Activated T-helper 1 cell treated with anti-CD3 and anti-CD28 coated beads, Interleukin-12 subunit alpha, Interleukin-12 subunit beta, Interleukin-2, Interleukin-4 antibody, amounts not matched to agents 30 ng/mL and 10 ng/mL and 1 ng/mL, durations not matched to agents 14 hours and 24 hours and 36 hours (primary cell): ENCODE measurements at regions of chr2 and their contacts with region 1.

Region 1: DNA sequence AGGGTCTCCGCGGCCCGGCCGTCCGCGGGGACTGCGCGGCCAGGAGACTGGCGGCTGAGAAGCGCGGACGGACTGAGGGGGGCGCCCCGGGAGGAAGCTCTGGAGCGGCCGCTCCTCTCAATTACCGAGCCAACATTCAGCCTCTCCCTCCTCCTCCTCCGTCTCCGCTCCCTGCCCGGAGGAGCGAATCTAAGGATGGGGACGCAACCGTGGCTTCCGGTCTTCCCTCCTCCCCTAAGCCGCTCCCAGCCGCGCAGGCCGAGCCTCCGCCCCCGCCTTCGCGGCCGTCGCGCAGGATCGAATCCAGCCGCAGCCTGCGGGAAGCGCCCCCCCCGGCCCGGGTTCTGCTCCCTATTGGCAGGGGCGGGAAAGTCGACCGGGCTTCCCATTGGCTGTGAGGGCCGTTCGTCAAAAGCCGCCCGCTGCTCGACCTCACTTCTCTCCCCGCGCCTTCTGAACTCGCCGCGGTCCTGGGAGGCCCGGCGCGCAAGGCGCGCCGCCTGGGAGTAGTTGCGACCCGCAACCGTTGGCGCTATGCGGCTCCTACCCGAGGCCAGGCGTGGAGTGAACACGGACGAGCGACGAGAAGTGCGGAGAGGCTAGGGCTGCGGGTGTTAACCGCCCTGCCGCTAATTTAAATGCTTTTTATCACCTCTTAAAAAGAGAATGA is at the start of gene HNRNPLL:
- DNase-seq: peak; percentile 94
- H3K4me3 Mint-ChIP-seq: peak within 1 kb of the TSS; percentile 91
- H3K27ac Mint-ChIP-seq: peak within 1 kb of the TSS; percentile 92
- H3K4me1 Mint-ChIP-seq: peaks cover 54% of the 10 kb centered on the region
- H3K27me3 Mint-ChIP-seq: no peaks in the 10 kb centered on the region
- total RNA-seq, gene HNRNPLL: 85.8 and 91.5 TPM in 2 replicates

Region 2: GRCh38 chr2:38590053-38590452 is 12.8 kb before region 1 on chr2:
- intact Hi-C with region 1: loop called (anchors 1 kb)
- DNase-seq: no peak
- H3K4me3 Mint-ChIP-seq: no peak overlapping the region
- H3K27ac Mint-ChIP-seq: no peak overlapping the region
- H3K4me1 Mint-ChIP-seq: peaks cover 64% of the 10 kb centered on the region
- H3K27me3 Mint-ChIP-seq: no peaks in the 10 kb centered on the region

Region 3: DNA sequence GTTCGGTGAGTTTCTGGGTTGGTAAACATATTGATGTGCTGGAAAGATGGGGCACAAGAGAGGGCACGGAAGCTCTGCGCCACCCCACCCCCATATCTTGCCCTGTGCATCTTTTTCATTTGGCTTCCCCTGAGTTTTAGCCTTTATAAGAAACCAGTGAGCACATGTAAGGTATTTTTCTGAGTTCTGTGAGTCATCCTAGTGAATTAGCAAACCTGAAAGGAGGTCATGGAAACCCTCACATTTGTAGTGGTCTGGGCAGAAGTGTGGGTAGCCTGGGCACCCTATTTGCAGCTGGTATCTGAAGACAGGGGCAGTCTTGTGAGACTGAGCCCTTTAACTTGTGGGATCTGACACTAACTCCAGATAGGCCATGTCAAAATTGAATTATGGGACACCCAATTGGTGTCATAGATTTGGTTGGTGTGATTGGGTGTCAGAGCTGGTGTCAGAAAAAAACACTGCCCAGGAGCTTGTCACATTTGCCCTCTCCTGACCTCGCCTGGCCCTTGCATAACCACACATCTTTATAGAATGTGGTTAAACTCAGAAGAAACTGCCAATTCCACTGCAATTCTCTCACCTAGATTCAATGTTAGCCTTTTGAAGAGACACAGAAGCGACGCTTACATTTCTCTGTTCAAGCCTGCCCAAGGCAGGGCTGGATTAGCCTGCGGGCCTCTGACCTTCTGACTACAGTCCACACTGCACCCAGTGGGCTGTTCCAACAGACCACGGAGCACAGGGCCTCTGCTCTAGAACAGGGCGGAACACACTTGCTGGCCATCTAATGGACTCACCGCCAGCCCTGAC is 51.1 kb after region 1 on chr2:
- intact Hi-C with region 1: loop called (anchors 1 kb)
- DNase-seq: peak; percentile 30
- H3K4me3 Mint-ChIP-seq: peak overlapping the region; percentile 68
- H3K27ac Mint-ChIP-seq: peak overlapping the region; percentile 90
- H3K4me1 Mint-ChIP-seq: peaks cover 80% of the 10 kb centered on the region
- H3K27me3 Mint-ChIP-seq: no peaks in the 10 kb centered on the region

Region 4: DNA sequence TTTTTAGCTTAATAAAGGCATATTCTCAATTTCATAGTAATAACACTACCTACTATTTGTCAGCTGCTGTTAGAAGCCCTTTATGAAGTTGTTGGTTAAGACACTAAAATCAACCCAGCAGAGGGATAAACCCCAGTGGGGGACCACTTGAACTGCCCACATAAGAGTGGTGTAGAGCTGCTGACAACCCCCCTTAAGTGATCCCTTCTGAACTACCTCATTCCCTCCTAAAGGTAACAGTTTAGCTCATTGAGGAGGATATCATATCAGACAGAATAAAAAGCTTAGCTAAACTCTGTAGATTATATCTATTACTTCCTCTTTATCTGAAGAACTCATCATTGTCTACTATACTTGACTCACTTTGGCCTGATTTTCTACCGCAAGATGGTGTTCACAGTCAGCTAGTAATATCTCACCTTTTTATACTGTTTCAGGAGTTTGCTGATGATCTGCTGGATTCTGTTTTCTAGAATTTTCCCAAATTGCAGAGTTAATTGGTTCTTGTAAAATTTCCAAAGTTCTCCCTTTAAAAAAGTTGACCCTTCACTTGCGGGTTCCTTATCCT is 79.2 kb after region 1 on chr2:
- intact Hi-C with region 1: loop called (anchors 5 kb)
- DNase-seq: no peak
- H3K4me3 Mint-ChIP-seq: no peak overlapping the region
- H3K27ac Mint-ChIP-seq: peak overlapping the region; percentile 77
- H3K4me1 Mint-ChIP-seq: peaks cover 56% of the 10 kb centered on the region
- H3K27me3 Mint-ChIP-seq: no peaks in the 10 kb centered on the region

Region 5: DNA sequence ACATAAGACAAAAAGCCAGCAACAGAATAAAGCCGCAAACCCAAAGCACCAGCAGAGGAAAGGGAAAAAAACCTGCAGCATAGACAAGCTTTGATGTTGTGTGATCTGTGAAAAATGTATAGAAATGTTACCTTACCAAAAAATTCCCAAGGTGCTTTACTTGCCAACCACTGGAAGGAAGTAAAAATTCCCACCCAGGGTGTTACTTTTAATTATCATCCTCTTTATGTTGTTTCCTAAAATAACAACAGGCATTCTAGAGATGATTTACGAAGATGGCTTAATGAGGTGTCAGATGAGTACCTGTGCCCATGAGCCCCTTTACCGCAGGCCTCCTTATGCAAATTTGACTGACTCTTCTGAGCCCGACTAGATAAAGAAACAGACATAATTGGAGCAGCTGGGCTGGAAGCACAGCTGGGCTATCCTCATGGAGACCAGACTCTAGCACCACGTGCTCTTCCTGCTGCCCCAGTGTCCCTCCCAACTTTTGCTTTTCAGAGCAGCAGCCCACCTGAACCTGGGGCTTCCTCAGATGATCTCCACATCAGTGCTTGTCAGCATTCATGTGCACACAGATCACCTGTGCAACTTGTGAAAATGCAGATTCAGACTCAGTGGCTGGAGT is 106.8 kb after region 1 on chr2:
- intact Hi-C with region 1: loop called (anchors 1 kb)
- DNase-seq: peak; percentile 29
- H3K4me3 Mint-ChIP-seq: peak overlapping the region; percentile 66
- H3K27ac Mint-ChIP-seq: peak overlapping the region; percentile 95
- H3K4me1 Mint-ChIP-seq: peaks cover 77% of the 10 kb centered on the region
- H3K27me3 Mint-ChIP-seq: no peaks in the 10 kb centered on the region

Region 6: GRCh38 chr2:38740851-38741731 is 138.2 kb after region 1 on chr2:
- intact Hi-C with region 1: loop called (anchors 5 kb)
- DNase-seq: no peak
- H3K4me3 Mint-ChIP-seq: no peak overlapping the region
- H3K27ac Mint-ChIP-seq: no peak overlapping the region
- H3K4me1 Mint-ChIP-seq: peaks cover 34% of the 10 kb centered on the region
- H3K27me3 Mint-ChIP-seq: no peaks in the 10 kb centered on the region

Region 7: GRCh38 chr2:38778687-38779082 is 175.8 kb after region 1 on chr2:
- intact Hi-C with region 1: loop called (anchors 1 kb)
- DNase-seq: no peak
- H3K4me3 Mint-ChIP-seq: peak overlapping the region; percentile 100
- H3K27ac Mint-ChIP-seq: peak overlapping the region; percentile 100
- H3K4me1 Mint-ChIP-seq: peaks cover 16% of the 10 kb centered on the region
- H3K27me3 Mint-ChIP-seq: peaks cover 13% of the 10 kb centered on the region